ENCODE measurements at regions of chr12 and their contacts with region 1.

Region 1: DNA sequence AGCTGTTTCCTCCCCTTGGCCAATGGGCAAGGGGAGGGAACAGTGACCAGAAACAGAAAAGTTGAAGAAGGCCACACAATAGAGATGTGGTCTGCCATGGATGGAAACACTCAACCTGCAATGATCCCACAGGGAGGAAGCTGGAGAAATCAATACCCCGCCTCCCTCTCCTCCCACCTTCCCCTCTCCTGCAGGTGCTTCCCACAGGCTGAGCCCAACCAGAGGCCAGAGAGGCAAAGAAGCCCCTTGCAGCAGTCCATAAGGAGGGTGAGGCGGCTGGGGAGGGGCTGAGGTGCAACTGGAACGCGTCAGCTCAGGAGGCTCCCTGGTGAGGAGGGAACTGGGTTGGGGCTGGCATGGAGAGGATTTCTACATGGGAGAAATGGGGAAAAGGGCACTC is 84.0 kb downstream of the RNF34 start:
- DNase-seq: no peak
- ATAC-seq: no peak
- H3K4me3 Mint-ChIP-seq: no peak overlapping the region
- H3K27ac Mint-ChIP-seq: no peak overlapping the region
- H3K4me1 Mint-ChIP-seq: no peaks in the 10 kb centered on the region
- H3K27me3 Mint-ChIP-seq: no peaks in the 10 kb centered on the region
- CTCF ChIP-seq: no peak

Region 2: GRCh38 chr12:120767485-120767944 is 716.4 kb before region 1 on chr12:
- CTCF ChIA-PET with region 1: no interaction called
- POLR2A ChIA-PET with region 1: no interaction called
- intact Hi-C with region 1: no loop called
- DNase-seq: no peak
- ATAC-seq: no peak
- H3K4me3 Mint-ChIP-seq: no peak overlapping the region
- H3K27ac Mint-ChIP-seq: no peak overlapping the region
- H3K4me1 Mint-ChIP-seq: peaks cover 3% of the 10 kb centered on the region
- H3K27me3 Mint-ChIP-seq: no peaks in the 10 kb centered on the region
- CTCF ChIP-seq: no peak

Region 3: DNA sequence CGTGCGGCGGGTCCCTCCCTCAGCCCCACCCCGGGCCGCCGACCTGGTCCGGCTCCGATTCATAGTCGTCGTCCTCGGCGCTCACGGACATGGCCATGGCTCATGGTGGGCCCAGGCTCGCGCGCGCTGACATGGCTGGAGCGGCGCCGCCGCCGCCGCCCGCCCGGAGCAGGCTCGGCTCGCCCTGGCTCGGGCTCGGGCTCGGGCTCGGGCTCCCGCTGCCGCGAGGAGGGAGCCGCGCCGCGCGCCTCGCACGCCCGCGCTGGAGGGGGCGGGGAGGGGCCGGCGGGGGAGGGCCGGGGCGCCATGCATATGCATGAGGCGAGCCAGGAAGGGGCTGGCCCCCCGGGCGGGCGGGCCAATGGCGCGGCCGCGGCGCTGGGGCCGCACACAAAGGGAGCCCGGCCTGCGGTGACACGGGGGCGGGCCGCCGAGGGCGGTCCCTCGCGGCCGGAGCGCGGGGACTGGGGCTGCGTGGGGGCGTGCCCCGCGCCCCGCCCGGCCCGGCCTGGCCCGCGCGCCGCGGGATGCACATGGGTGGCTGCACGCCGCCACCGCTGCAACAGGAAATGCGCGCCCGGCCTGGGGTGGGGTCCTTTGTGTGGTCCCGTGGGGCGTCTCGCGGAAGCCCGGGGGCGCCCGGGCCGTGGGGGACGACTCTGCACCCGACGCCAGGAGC is 16.7 kb before region 1 on chr12:
- CTCF ChIA-PET with region 1: interaction called, 16 read pairs
- POLR2A ChIA-PET with region 1: no interaction called
- intact Hi-C with region 1: no loop called
- DNase-seq: peak; percentile 90
- ATAC-seq: peak; percentile 92
- H3K4me3 Mint-ChIP-seq: peak overlapping the region; percentile 49
- H3K27ac Mint-ChIP-seq: no peak overlapping the region
- H3K4me1 Mint-ChIP-seq: peaks cover 26% of the 10 kb centered on the region
- H3K27me3 Mint-ChIP-seq: no peaks in the 10 kb centered on the region
- CTCF ChIP-seq: no peak

Measured in activated CD8-positive, alpha-beta T cell treated with anti-CD3 and anti-CD28 coated beads for 36 hours (primary cell).